CD4-positive, alpha-beta memory T cell (primary cell): ENCODE measurements at regions of chr15 and their contacts with region 1.

Region 1: DNA sequence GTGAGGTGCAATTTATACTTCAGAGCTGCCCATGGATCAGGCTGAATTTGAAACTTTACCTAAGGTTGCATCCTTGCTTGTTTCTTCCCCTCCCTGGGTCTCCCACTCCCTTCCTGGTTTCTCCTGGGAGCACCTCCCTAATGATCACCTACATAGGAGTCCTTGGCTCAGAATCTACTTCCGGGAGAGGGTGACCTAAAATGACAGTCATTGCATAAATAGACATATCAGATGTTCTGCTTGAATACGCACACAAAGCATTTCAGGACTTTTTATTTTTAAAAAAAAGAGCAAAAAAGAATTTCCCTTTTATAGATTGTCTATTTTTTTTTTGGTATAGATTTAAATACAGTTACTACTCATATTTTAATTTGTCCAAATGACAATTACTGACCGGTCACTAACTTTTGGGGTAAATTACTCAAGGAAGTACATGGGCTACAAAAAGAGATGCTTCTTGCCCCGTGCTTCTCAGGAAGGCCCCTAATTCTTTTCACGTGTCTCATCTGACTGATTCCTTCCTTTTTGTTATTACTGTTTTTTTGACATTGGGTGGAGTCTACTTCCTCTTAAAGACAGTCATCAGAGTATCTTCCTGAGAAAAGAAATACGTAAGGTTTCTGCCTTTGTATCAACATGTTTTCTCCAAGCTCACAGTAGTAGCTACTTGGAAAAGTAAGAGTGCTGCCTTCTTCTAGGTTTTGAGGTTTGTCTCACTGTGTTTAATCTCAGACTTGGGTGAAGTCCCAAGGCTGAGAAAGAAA is 4.9 kb upstream of the MYZAP start:
- DNase-seq: peak in 4 of 5 donors; percentile 19 to 43 (median 36)
- H3K4me3 ChIP-seq: no peak overlapping the region
- H3K4me3 Mint-ChIP-seq: peak overlapping the region in 4 of 8 donors; percentile 25 to 75 (median 42)
- H3K27ac ChIP-seq: no peak overlapping the region
- H3K27ac Mint-ChIP-seq: peak overlapping the region; percentile 34 to 90 (median 78)
- H3K4me1 ChIP-seq: peaks cover 29% of the 10 kb centered on the region
- H3K4me1 Mint-ChIP-seq: peaks cover 16 to 31% (median 24%) of the 10 kb centered on the region in 4 donors
- H3K27me3 ChIP-seq: no peaks in the 10 kb centered on the region
- H3K27me3 Mint-ChIP-seq: peaks cover 16 to 19% of the 10 kb centered on the region in 2 donors

Region 2: DNA sequence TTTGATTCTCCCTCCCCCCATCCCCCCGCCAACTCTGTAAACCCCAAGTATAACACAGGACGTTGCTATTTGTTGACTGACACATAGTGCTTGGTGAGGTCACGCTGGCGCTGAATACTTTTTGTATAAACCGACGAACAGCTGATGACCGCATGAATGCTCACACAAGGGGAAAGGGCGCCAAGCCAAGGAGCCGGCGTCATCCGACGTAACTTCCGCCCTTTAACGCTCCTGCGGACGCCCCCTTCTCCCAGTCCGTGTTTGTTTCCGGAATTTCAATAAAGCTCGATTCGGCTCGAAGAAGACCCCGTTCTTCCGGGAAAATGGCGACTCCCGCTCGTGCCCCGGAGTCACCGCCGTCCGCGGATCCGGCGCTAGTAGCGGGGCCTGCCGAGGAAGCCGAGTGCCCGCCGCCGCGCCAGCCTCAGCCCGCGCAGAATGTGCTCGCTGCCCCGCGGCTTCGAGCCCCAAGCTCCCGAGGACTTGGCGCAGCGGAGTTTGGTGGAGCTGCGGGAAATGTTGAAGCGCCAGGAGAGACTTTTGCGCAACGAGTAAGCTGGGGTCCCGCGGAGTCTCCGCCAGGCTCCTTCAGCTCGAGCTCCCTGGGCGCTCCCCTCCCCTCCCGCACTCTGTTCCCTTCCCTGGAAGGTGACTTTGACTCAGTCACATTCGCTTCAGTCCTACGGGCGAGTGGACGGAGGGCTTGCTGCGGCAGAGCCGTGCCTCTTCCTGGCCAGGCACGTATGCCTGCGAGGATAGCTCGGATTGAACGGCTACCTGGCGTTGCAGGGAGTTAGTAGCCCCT is 119.8 kb after region 1 on chr15 and contains the start of gene POLR2M:
- CTCF ChIA-PET with region 1: no interaction called
- POLR2A ChIA-PET with region 1: interaction called, 12 read pairs
- intact Hi-C with region 1: no loop called
- DNase-seq: peak; percentile 90 to 97 (median 93)
- H3K4me3 ChIP-seq: peak within 1 kb of the TSS; percentile 77 to 94
- H3K4me3 Mint-ChIP-seq: peak within 1 kb of the TSS; percentile 87 to 93 (median 90)
- H3K27ac ChIP-seq: peak within 1 kb of the TSS; percentile 84
- H3K27ac Mint-ChIP-seq: peak within 1 kb of the TSS; percentile 84 to 98 (median 97)
- H3K4me1 ChIP-seq: peaks cover 65% of the 10 kb centered on the region
- H3K4me1 Mint-ChIP-seq: peaks cover 51 to 88% (median 75%) of the 10 kb centered on the region in 4 donors
- H3K27me3 ChIP-seq: no peaks in the 10 kb centered on the region
- H3K27me3 Mint-ChIP-seq: no peaks in the 10 kb centered on the region
- total RNA-seq, gene POLR2M: 86.5 to 97.3 TPM